Activated T-helper 1 cell treated with anti-CD3 and anti-CD28 coated beads, Interleukin-12 subunit alpha, Interleukin-12 subunit beta, Interleukin-2, Interleukin-4 antibody, amounts not matched to agents 30 ng/mL and 10 ng/mL and 1 ng/mL, durations not matched to agents 14 hours and 24 hours and 36 hours (primary cell): ENCODE measurements at regions of chr12 and their contacts with region 1.

Region 1: DNA sequence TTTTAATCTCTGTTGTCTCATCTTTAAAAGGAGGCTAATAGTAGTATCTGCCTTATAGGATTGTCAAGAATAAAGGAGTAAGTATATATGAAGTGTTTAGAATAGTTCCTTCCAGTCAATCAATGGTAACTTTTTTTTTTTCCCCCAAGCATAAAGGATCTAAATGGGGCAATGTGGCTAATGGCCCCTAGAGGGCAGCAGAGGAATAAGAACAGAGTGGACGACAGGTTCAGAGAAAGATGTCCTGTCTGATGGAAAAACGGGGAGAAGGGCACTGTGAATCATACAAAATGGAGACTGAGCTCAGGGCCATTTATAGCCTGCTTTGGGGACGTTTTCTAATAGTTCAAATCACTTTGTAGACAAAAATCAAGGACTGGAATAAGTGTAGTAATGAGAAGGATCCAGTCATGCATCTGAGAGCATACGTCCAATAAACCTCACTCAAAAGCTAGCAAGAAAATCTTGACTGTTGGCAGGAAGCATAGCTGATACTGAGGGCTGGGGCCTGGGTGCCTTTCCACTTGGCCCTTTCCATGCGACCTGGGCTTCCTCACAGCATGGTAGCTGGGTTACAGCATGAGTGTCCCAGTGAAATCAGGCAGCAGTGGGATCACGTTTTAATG is 51.3 kb downstream of the IFNG-AS1 start:
- DNase-seq: peak; percentile 56
- H3K4me3 Mint-ChIP-seq: peak overlapping the region; percentile 13
- H3K27ac Mint-ChIP-seq: peak overlapping the region; percentile 83
- H3K4me1 Mint-ChIP-seq: peaks cover 65% of the 10 kb centered on the region
- H3K27me3 Mint-ChIP-seq: no peaks in the 10 kb centered on the region

Region 2: DNA sequence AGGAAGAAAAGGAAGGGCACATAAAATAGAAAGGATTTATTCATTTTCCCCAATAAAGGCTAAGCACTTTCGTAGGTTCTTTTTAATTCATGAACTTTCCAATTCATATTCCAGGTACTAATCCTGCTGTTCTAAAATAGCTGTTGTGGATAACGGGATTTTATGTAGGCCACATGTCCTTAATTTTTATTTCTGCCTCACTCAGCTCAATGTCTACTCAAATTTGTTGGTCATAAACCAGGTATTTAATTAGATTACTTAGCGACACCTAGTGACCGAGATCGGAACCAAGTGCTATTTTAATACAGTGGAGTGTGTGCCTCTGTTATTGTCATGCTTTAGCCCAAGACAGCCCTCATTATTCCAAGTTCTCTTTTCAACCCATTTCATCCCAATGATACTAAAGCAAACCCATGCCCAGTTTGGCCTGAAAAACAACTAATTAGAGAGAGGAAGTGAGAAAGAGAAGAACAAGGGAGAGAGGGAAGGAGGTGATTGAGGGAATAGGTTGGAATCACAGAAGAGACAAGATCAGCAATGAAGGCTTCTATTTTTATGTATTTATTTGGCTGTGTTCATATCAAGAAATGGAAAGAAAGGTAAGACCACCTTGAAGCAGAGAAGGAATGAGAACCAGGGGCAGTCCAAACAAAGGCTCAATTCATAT is 97.2 kb before region 1 on chr12:
- intact Hi-C with region 1: loop called (anchors 5 kb)
- DNase-seq: peak; percentile 27
- H3K4me3 Mint-ChIP-seq: no peak overlapping the region
- H3K27ac Mint-ChIP-seq: no peak overlapping the region
- H3K4me1 Mint-ChIP-seq: peaks cover 5% of the 10 kb centered on the region
- H3K27me3 Mint-ChIP-seq: peaks cover 6% of the 10 kb centered on the region

Region 3: GRCh38 chr12:68001486-68002466 is 38.8 kb before region 1 on chr12:
- intact Hi-C with region 1: loop called (anchors 1 kb)
- DNase-seq: no peak
- H3K4me3 Mint-ChIP-seq: no peak overlapping the region
- H3K27ac Mint-ChIP-seq: no peak overlapping the region
- H3K4me1 Mint-ChIP-seq: peaks cover 35% of the 10 kb centered on the region
- H3K27me3 Mint-ChIP-seq: no peaks in the 10 kb centered on the region

Region 4: DNA sequence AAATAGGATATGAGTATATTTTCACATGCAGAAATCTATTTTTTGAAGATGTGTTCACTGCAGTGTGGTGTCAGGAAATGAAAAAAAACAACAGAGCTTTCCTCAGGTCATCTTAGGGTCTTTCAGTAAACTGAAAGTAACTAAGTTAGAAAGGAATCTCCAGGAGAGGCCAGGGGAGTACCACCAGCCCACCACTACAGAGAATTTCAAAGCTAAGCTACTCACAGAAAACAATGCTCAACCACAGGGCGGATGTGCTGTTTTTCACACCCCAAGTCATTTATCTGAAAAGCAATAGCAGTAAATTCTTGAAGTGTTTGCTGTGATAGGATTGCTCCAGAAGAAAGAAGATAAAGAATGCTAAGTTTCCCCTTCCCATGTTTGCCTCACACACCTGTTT is 40.0 kb after region 1 on chr12:
- intact Hi-C with region 1: loop called (anchors 1 kb)
- DNase-seq: peak; percentile 57
- H3K4me3 Mint-ChIP-seq: peak overlapping the region; percentile 2
- H3K27ac Mint-ChIP-seq: peak overlapping the region; percentile 80
- H3K4me1 Mint-ChIP-seq: peaks cover 57% of the 10 kb centered on the region
- H3K27me3 Mint-ChIP-seq: no peaks in the 10 kb centered on the region

Region 5: GRCh38 chr12:68158432-68158831 is 117.9 kb after region 1 on chr12:
- intact Hi-C with region 1: loop called (anchors 1 kb)
- DNase-seq: no peak
- H3K4me3 Mint-ChIP-seq: peak overlapping the region; percentile 91
- H3K27ac Mint-ChIP-seq: peak overlapping the region; percentile 87
- H3K4me1 Mint-ChIP-seq: peaks cover 65% of the 10 kb centered on the region
- H3K27me3 Mint-ChIP-seq: no peaks in the 10 kb centered on the region

Region 6: DNA sequence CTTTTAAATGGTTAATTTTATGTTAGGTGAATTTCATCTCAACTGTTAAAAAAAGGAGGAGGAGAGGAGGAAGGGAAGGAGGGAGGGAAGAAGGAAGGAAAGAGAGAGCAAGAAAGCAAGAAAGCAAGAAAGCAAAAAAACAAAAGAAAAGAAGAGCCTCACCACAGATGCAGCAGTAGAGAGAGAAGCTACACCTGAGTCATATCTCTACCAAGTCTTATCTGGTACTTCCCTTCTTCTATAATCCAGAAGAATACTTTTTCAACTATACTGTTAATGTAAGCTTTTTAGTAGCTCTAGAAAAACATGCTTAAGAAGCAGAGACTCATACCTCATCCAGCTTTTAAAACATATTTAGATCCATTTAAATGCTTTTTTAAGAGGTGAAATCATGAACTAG is 190.7 kb after region 1 on chr12:
- intact Hi-C with region 1: no loop called
- DNase-seq: no peak
- H3K4me3 Mint-ChIP-seq: no peak overlapping the region
- H3K27ac Mint-ChIP-seq: peak overlapping the region; percentile 13
- H3K4me1 Mint-ChIP-seq: peaks cover 66% of the 10 kb centered on the region
- H3K27me3 Mint-ChIP-seq: no peaks in the 10 kb centered on the region

Region 7: GRCh38 chr12:68259318-68259940 is 218.9 kb after region 1 on chr12:
- intact Hi-C with region 1: no loop called
- DNase-seq: peak; percentile 31
- H3K4me3 Mint-ChIP-seq: peak overlapping the region; percentile 12
- H3K27ac Mint-ChIP-seq: peak overlapping the region; percentile 69
- H3K4me1 Mint-ChIP-seq: peaks cover 68% of the 10 kb centered on the region
- H3K27me3 Mint-ChIP-seq: peaks cover 19% of the 10 kb centered on the region

Region 8: GRCh38 chr12:68279227-68280054 is 238.9 kb after region 1 on chr12:
- intact Hi-C with region 1: loop called (anchors 5 kb)
- DNase-seq: no peak
- H3K4me3 Mint-ChIP-seq: no peak overlapping the region
- H3K27ac Mint-ChIP-seq: peak overlapping the region; percentile 45
- H3K4me1 Mint-ChIP-seq: peaks cover 61% of the 10 kb centered on the region
- H3K27me3 Mint-ChIP-seq: no peaks in the 10 kb centered on the region

Region 9: DNA sequence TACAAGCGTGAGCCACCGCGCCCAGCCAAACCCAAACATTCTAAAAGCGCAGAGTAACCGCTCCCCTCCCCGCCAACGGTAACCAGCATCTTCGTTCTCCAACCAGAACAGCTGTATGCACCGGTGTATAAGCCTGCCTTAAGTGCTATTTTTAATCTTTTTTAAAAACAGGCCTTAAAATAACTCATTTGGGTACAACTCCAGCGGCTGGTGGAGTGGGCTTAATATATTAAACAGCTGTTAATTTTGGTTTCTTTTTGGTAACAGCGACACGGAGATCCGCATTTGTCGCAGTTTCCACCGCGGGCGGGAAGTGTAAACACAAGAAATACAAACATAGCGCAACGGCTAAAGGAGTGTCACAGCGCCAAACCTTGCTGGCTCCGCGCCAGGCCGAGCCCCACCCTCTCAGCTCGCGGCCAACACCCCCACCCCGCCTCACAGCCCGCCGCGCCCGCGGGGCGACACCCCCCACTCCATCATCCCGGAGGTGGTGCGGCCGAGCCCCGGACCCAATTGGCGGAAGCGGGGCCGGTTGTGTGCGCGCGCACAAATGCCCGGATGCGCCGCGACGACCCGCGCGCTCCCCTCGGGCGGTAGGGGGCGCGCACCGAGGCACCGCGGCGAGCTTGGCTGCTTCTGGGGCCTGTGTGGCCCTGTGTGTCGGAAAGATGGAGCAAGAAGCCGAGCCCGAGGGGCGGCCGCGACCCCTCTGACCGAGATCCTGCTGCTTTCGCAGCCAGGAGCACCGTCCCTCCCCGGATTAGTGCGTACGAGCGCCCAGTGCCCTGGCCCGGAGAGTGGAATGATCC is 767.2 kb after region 1 on chr12 and contains the start of gene MDM2:
- intact Hi-C with region 1: loop called (anchors 5 kb)
- DNase-seq: peak; percentile 98
- H3K4me3 Mint-ChIP-seq: peak within 1 kb of the TSS; percentile 97
- H3K27ac Mint-ChIP-seq: peak within 1 kb of the TSS; percentile 99
- H3K4me1 Mint-ChIP-seq: peaks cover 34% of the 10 kb centered on the region
- H3K27me3 Mint-ChIP-seq: peaks cover 2% of the 10 kb centered on the region
- total RNA-seq, gene MDM2: 279 and 303 TPM in 2 replicates